Natural killer cell (primary cell): ENCODE measurements at regions of chr20 and their contacts with region 1.

Region 1: DNA sequence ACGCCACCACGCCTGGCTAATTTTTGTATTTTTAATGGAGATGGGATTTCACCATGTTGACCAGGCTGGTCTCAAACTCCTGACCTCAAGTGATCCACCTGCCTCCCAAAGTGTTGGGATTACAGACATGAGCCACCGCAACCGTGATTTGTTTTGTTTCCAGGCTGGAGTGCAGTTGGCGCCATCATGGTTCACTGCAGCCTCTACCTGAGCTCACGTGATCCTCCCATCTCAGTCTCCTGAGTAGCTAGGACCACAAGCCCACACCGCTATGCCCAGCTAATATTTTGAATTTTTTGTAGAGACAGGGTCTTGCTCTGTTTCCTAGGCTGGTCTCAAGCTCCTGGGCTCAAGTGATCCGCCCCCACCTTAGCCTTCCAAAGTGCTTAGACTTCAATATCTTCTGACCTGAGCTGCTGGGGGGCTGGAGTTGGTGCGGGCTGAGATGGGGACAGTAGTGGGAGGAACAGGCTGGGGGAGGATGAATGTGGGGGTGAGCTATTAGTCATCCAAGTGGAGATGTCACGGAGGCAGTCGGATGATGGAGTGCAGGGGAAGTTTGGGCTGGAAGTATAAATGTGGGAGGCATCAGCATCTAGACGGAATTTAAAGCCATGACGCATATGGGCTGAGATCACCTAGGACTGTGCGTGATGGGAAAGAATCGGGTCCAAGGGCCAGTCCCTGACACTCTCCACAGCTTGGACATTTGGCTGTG is 23.1 kb upstream of the ZMYND8 start:
- DNase-seq: no peak
- ATAC-seq: no peak
- H3K4me3 ChIP-seq: no peak overlapping the region
- H3K4me3 Mint-ChIP-seq: no peak overlapping the region
- H3K27ac ChIP-seq: no peak overlapping the region
- H3K27ac Mint-ChIP-seq: no peak overlapping the region
- H3K4me1 ChIP-seq: peaks cover 7% of the 10 kb centered on the region
- H3K4me1 Mint-ChIP-seq: peaks cover 0 to 6% of the 10 kb centered on the region in 2 donors
- H3K27me3 ChIP-seq: no peaks in the 10 kb centered on the region
- H3K27me3 Mint-ChIP-seq: peaks cover 0 to 2% of the 10 kb centered on the region in 2 donors
- CTCF ChIP-seq: no peak

Region 2: DNA sequence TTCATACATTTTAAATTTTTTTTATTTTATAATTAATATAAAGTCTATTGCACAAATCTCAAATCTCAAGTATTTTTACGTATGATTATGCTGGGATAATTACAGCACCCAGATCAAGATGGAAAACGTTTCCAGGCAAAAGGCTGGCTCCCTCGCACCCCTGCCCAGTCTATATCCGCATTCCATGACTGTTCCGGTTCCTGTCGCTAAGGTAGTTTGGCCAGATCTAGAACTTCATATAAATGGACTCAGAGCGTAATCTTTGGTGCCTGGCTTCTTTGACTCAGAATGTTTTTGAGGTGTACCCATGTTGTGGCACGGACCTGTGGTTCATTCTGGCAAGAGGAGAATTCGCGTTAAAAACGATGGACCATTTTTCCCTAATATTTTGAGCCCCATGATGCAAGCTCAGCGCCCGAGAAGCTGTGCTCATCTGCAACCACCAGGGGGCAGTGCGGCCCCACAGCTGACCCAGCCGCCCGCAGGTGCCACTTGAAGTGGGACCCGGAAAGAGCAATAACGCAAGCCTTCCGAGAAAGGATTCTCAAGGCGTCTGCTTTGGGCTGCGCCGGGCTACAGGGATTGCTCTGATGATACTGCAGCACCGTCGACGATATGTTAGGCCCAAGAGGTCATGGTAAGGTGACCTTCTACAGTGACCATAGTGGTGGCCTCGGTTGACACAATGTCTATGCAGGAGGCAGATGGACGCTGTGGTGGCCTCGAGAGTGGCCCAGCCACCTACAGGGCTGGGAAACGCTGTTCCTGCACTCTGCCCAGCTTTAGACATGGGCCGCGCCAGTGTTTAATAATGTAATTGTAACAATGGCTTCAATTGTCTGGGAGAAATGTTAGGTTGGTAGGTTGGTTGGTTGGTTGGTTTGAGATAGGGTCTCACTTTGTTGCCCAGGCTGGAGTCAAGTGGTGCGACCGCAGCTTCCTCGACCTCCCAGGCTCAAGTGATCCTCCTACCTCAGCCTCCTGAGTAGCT is 183.2 kb before region 1 on chr20:
- intact Hi-C with region 1: loop called (anchors 1 kb)
- DNase-seq: peak; percentile 31 to 82
- ATAC-seq: peak; percentile 87 to 96 (median 89)
- H3K4me3 ChIP-seq: no peak overlapping the region
- H3K4me3 Mint-ChIP-seq: no peak overlapping the region
- H3K27ac ChIP-seq: no peak overlapping the region
- H3K27ac Mint-ChIP-seq: no peak overlapping the region
- H3K4me1 ChIP-seq: peaks cover 4% of the 10 kb centered on the region
- H3K4me1 Mint-ChIP-seq: peaks cover 11% of the 10 kb centered on the region in 2 donors
- H3K27me3 ChIP-seq: no peaks in the 10 kb centered on the region
- H3K27me3 Mint-ChIP-seq: peaks cover 0 to 4% of the 10 kb centered on the region in 2 donors
- CTCF ChIP-seq: peak; percentile 95

Region 3: DNA sequence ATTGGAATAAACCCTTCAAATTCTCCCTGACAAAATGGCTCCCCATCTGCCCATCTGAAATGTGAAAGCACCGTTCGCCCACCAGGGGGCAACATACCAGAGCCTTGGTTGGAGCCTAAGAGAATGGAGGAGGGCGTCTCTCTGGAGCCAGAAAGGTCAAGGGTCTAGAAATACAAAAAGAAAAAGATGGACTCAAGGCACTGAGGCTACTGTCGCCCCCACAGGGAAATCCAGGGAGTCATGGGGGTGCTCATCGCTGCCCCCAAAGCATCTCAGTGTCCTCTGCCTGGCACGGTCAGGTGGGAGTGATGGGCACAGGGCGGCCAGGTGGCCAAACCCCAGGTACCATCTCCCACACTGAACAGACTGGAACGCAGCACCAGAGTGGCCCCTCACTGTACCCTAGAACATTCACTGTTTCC is 159.4 kb before region 1 on chr20:
- intact Hi-C with region 1: loop called (anchors 1 kb)
- DNase-seq: peak; percentile 42 to 67
- ATAC-seq: peak in 2 of 3 donors; percentile 57 to 69
- H3K4me3 ChIP-seq: no peak overlapping the region
- H3K4me3 Mint-ChIP-seq: no peak overlapping the region
- H3K27ac ChIP-seq: no peak overlapping the region
- H3K27ac Mint-ChIP-seq: peak overlapping the region in 1 of 2 donors; percentile 35
- H3K4me1 ChIP-seq: no peaks in the 10 kb centered on the region
- H3K4me1 Mint-ChIP-seq: peaks cover 16 to 18% of the 10 kb centered on the region in 2 donors
- H3K27me3 ChIP-seq: no peaks in the 10 kb centered on the region
- H3K27me3 Mint-ChIP-seq: no peaks in the 10 kb centered on the region
- CTCF ChIP-seq: peak; percentile 77

Region 4: DNA sequence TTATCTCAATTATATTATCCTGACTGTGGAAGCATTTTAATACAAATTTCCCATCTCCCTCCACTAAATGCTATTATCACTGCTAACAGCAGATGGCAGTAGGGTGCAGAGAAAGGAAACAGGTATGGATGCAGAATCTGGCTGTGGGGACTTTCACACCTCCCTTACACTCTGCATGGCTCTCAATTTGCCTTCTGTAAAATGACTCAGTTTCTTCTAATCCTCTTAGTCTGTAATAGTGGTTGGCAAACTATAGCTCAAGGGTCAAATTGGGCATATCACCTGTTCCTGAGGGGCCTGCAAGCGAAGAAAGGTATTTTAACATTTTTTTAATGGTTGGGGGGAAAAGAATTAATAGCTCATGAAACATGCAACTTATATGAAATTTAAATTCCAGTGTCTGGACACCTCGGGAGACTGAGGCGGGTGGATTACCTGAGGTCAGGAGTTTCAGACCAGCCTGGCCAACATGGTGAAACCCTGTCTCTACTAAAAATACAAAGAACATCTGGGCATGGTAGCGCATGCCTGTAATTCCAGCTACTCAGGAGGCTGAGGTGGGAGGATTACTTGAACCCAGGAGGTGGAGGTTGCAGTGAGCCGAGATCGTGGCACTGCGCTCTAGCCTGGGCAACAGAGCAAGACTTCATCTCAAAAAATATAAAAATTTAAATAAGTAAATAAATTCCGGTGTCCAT is 106.5 kb before region 1 on chr20:
- intact Hi-C with region 1: loop called (anchors 1 kb)
- DNase-seq: peak in 1 of 2 donors; percentile 83
- ATAC-seq: peak; percentile 83 to 88 (median 84)
- H3K4me3 ChIP-seq: no peak overlapping the region
- H3K4me3 Mint-ChIP-seq: no peak overlapping the region
- H3K27ac ChIP-seq: no peak overlapping the region
- H3K27ac Mint-ChIP-seq: peak overlapping the region; percentile 46 to 50
- H3K4me1 ChIP-seq: no peaks in the 10 kb centered on the region
- H3K4me1 Mint-ChIP-seq: peaks cover 13 to 15% of the 10 kb centered on the region in 2 donors
- H3K27me3 ChIP-seq: no peaks in the 10 kb centered on the region
- H3K27me3 Mint-ChIP-seq: no peaks in the 10 kb centered on the region
- CTCF ChIP-seq: peak; percentile 98